GM12878 (cell line): ENCODE measurements at regions of chr2 and their contacts with region 1.

Region 1: DNA sequence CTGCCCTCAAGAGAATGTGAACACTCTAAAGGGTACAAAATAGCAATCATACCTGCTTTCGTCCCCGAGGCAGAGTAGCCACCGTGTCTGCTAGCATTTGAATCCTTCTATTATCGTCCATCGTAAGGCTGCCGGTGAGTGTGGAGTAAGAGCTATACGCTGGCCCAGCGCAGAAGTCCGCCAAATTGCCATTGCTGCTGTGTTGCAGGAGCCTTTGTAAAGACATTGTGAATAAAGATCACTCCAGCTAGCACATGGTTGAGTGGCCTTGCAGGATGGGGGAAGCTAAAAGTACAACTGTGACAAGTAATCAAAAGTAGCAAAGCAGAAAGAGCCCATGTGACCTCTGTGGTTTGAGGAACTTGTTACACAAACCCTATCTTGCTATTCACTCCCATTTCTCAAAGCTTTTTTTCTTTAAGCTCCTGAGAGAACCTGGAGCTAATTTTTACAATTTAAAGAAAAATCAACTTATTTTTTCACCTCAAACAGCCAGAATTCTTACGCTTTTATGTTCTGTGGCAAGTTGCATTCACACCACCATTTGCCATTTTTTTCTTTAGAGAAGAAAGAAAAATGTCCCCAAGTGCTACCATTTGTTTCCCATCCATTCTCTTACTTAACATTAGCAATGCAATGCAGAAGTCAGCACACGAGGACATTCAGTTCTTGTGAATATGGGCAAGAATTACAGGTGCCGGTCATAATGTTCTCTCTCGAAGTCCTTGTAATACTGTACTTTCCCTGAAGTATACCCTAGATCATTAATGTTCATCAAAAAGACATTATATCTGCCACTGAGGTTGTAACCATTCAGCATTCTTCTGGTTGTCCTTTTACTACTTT is at the start of gene CYTIP:
- DNase-seq: peak; percentile 91
- ATAC-seq: peak; percentile 57
- H3K4me3 ChIP-seq: peak within 1 kb of the TSS; percentile 90
- H3K27ac ChIP-seq: peak within 1 kb of the TSS; percentile 98
- H3K4me1 ChIP-seq: peaks cover 8% of the 10 kb centered on the region; the same call in 1 of the 2 replicates
- H3K27me3 ChIP-seq: no peaks in the 10 kb centered on the region
- CTCF ChIP-seq: no peak
- EP300 ChIP-seq: peak; percentile 52 to 67; a peak in 3 of 4 replicates
- POLR2A ChIP-seq: peak; percentile 89
- RAD21 ChIP-seq: 0 out of 2 replicates have a peak, but pooled peaks have one; percentile 21
- polyA plus RNA-seq, gene CYTIP: 71.6 to 75.4 TPM

Region 2: DNA sequence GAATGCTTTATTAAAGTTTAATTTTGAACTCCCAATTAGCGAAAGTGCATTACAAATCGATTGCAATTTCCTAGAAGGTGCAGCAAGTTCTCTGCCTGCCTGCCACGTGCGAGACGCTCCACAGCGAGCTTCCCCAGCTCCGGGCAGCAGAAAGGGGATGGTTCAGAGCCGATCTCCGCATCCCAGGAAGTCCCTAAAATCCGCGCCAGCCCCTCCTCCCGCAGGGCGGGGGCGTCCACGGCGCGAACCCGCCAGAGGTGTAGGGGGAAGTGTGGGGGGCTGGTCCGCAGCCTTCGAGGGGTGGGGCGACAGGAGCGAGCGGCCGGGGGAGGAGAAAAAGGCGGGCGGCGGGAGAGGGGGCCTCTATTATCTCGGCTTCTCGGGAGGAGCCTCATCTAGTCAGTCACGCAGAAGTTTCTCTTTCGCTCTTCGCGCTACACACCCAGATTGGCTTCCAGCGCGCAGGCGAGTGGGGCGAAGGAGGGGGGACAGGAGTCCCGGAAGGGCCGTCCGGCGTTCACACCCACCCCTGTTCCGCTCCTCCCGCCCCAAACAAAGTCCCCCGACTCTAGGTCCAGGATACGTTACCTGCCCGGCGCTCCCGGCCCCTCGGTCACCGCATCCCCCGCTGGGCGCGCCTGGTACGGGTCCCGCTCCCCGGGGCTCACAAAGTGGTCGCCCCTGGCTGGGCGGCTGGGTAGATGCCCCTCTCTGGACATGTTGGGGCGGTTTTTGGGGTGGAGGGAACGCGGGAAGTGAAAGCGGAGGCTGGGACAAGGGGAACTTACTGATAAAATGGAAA is 1102.4 kb before region 1 on chr2:
- CTCF ChIA-PET with region 1: no interaction called
- POLR2A ChIA-PET with region 1: no interaction called
- RAD21 ChIA-PET with region 1: no interaction called
- SMC1A ChIA-PET with region 1: no interaction called
- in situ Hi-C with region 1: no loop called
- intact Hi-C with region 1: loop called (anchors 2 kb)
- DNase-seq: peak; percentile 89
- ATAC-seq: peak; percentile 86
- H3K4me3 ChIP-seq: peak overlapping the region; percentile 93
- H3K27ac ChIP-seq: peak overlapping the region; percentile 100
- H3K4me1 ChIP-seq: peaks cover 15% of the 10 kb centered on the region
- H3K27me3 ChIP-seq: no peaks in the 10 kb centered on the region
- CTCF ChIP-seq: no peak
- EP300 ChIP-seq: no peak; a peak in 1 of 4 replicates
- POLR2A ChIP-seq: peak; percentile 90
- RAD21 ChIP-seq: no peak; the same call in 1 of the 2 replicates

Region 3: DNA sequence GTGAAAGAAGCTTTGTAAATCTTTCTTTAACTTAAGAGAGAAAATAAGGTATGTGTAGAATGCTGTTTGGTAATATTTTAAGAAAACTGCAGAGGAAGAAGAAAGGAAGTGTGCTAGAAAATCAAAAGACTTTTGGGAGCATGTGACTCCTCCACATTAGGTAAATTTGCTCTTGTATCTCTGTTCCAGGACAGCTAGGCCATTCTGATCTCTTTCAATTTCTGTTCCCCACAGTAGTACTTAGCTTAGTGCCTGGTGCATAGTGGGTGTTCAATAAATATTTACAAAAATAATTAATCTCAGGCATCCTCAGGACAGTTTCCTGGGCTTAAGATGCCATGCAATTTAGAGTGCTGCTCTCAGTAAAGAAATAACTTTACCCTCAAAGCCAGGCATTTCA is 902.8 kb before region 1 on chr2:
- CTCF ChIA-PET with region 1: no interaction called
- POLR2A ChIA-PET with region 1: no interaction called
- RAD21 ChIA-PET with region 1: no interaction called
- SMC1A ChIA-PET with region 1: no interaction called
- in situ Hi-C with region 1: no loop called
- intact Hi-C with region 1: no loop called
- DNase-seq: no peak
- ATAC-seq: 0 out of 3 replicates have a peak, but pooled peaks have one; percentile 6
- H3K4me3 ChIP-seq: no peak overlapping the region
- H3K27ac ChIP-seq: peak overlapping the region; percentile 37; the same call in 1 of the 2 replicates
- H3K4me1 ChIP-seq: peaks cover 44% of the 10 kb centered on the region
- H3K27me3 ChIP-seq: no peaks in the 10 kb centered on the region
- CTCF ChIP-seq: no peak
- EP300 ChIP-seq: no peak
- POLR2A ChIP-seq: no peak
- RAD21 ChIP-seq: no peak

Region 4: DNA sequence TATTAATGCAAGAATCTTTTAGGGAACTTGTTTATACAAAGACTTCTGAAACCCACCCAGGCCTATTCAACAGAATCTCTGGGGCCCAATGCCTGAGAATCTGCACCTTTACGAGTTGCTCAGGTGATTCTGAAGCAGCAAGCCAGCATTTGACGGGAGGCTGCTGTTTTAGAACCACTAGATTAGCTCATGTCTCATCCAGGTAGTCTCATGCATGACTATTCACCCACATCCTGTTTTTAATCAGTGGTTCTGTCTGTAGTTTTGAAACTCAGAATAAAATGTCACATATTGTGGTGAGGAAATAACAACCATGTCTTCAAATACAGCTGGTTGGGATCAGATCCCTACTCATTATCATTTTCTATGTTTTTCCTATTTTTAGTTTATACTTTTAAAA is 39.7 kb before region 1 on chr2:
- CTCF ChIA-PET with region 1: interaction called, 15 read pairs
- POLR2A ChIA-PET with region 1: interaction called, 16 read pairs
- RAD21 ChIA-PET with region 1: interaction called, 32 read pairs
- SMC1A ChIA-PET with region 1: interaction called, 111 read pairs
- in situ Hi-C with region 1: no loop called
- intact Hi-C with region 1: no loop called
- DNase-seq: peak; percentile 85
- ATAC-seq: peak; percentile 99
- H3K4me3 ChIP-seq: no peak overlapping the region
- H3K27ac ChIP-seq: no peak overlapping the region; the same call in 1 of the 2 replicates
- H3K4me1 ChIP-seq: peaks cover 7% of the 10 kb centered on the region
- H3K27me3 ChIP-seq: no peaks in the 10 kb centered on the region
- CTCF ChIP-seq: no peak
- EP300 ChIP-seq: peak; percentile 87 to 92
- POLR2A ChIP-seq: no peak
- RAD21 ChIP-seq: 0 out of 2 replicates have a peak, but pooled peaks have one; percentile 17

Region 5: DNA sequence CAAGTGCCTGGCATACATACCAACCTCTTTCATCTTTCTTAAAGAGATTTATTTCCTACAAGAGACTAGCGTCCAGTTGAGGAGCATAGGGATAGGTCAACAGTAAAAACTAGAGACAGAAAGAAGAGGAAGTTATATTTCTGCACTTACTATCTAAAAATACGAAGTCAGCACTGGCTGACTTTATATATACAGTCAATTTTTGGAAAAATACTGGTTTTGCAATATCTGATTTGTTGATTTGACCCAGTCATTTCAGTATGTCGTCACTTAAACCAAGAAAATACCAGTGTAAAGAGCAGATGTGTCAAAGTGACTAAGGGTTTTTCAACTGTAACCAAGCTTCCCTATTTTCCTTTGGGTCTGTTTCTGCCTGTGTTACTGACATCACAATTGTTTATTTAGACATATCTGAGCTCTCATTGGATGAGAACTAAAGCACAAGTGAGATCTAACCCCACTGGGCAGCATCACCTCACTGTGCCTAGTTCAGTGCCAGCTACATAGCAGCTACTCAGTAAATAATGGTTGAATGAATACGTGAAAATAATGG is 23.2 kb before region 1 on chr2:
- CTCF ChIA-PET with region 1: interaction called, 5 read pairs
- POLR2A ChIA-PET with region 1: interaction called, 47 read pairs
- RAD21 ChIA-PET with region 1: interaction called, 116 read pairs
- SMC1A ChIA-PET with region 1: interaction called, 218 read pairs
- in situ Hi-C with region 1: no loop called
- intact Hi-C with region 1: no loop called
- DNase-seq: no peak
- ATAC-seq: peak; percentile 74
- H3K4me3 ChIP-seq: no peak overlapping the region
- H3K27ac ChIP-seq: peak overlapping the region; percentile 60
- H3K4me1 ChIP-seq: peaks cover 34% of the 10 kb centered on the region
- H3K27me3 ChIP-seq: no peaks in the 10 kb centered on the region
- CTCF ChIP-seq: no peak
- EP300 ChIP-seq: peak in 1 of 2 experiments; percentile 73; a peak in 2 of 4 replicates
- POLR2A ChIP-seq: no peak
- RAD21 ChIP-seq: no peak

Region 6: DNA sequence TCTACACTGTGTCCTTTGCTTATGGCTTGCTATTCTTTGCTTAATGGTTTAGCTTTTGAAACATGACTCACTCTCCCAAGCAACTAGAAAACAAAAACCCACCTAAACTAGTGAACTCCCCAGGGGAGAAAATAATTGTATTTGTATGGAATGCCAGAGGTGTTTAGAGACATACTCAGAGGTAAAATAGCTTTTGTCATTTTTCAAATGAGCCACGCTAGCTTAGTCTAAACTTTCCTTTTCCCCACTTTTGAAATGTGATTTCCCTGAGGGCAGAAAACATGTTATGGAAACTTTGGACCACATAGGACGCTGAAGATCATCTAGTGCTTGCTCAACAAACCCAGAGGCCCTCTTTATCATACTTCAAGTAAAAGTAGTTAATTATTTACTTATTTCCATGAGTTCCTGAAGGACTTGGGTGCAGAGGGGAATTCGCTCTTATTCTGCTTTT is 16.4 kb after region 1 on chr2:
- CTCF ChIA-PET with region 1: interaction called, 6 read pairs
- POLR2A ChIA-PET with region 1: interaction called, 90 read pairs
- RAD21 ChIA-PET with region 1: interaction called, 125 read pairs
- SMC1A ChIA-PET with region 1: interaction called, 119 read pairs
- in situ Hi-C with region 1: no loop called
- intact Hi-C with region 1: no loop called
- DNase-seq: no peak
- ATAC-seq: no peak
- H3K4me3 ChIP-seq: no peak overlapping the region
- H3K27ac ChIP-seq: no peak overlapping the region
- H3K4me1 ChIP-seq: no peaks in the 10 kb centered on the region
- H3K27me3 ChIP-seq: no peaks in the 10 kb centered on the region
- CTCF ChIP-seq: no peak
- EP300 ChIP-seq: no peak
- POLR2A ChIP-seq: no peak
- RAD21 ChIP-seq: no peak

Region 7: GRCh38 chr2:157480182-157480961 is 36.4 kb after region 1 on chr2:
- CTCF ChIA-PET with region 1: interaction called, 7 read pairs
- POLR2A ChIA-PET with region 1: interaction called, 26 read pairs
- RAD21 ChIA-PET with region 1: interaction called, 27 read pairs
- SMC1A ChIA-PET with region 1: interaction called, 28 read pairs
- in situ Hi-C with region 1: no loop called
- intact Hi-C with region 1: loop called (anchors 5 kb)
- DNase-seq: no peak
- ATAC-seq: peak; percentile 87
- H3K4me3 ChIP-seq: no peak overlapping the region
- H3K27ac ChIP-seq: peak overlapping the region; percentile 44
- H3K4me1 ChIP-seq: peaks cover 25% of the 10 kb centered on the region
- H3K27me3 ChIP-seq: no peaks in the 10 kb centered on the region
- CTCF ChIP-seq: no peak
- EP300 ChIP-seq: peak in 1 of 2 experiments; percentile 26; a peak in 1 of 4 replicates
- POLR2A ChIP-seq: peak; percentile 35; the same call in 1 of the 2 replicates
- RAD21 ChIP-seq: no peak

Region 8: DNA sequence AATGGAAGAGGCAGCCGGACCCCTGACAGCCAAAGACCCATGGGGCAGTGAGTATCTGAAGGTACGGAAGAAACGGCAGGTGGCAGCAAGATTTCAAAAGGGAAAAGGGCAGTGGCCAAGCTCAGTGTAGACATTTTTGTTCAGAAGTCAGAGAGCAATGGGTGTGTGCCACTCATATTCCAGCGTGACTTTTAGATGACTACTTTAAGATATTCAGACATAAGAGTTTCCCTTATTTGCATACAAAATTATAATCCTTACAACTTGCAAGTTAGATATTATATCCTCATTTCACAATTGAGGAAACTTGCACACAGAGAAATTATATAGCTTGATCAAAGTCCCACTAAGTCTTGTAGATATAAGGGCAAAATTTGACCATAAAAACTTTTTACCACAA is 60.6 kb after region 1 on chr2:
- CTCF ChIA-PET with region 1: no interaction called
- POLR2A ChIA-PET with region 1: no interaction called
- RAD21 ChIA-PET with region 1: no interaction called
- SMC1A ChIA-PET with region 1: no interaction called
- in situ Hi-C with region 1: no loop called
- intact Hi-C with region 1: no loop called
- DNase-seq: no peak
- ATAC-seq: no peak
- H3K4me3 ChIP-seq: no peak overlapping the region
- H3K27ac ChIP-seq: no peak overlapping the region
- H3K4me1 ChIP-seq: no peaks in the 10 kb centered on the region
- H3K27me3 ChIP-seq: peaks cover 0 to 3% of the 10 kb centered on the region in 2 experiments; a peak in 1 of 4 replicates
- CTCF ChIP-seq: no peak
- EP300 ChIP-seq: no peak
- POLR2A ChIP-seq: no peak
- RAD21 ChIP-seq: no peak